Activated CD4-positive, alpha-beta T cell treated with anti-CD3 and anti-CD28 coated beads for 36 hours (primary cell): ENCODE measurements at regions of chr5 and their contacts with region 1.

Region 1: DNA sequence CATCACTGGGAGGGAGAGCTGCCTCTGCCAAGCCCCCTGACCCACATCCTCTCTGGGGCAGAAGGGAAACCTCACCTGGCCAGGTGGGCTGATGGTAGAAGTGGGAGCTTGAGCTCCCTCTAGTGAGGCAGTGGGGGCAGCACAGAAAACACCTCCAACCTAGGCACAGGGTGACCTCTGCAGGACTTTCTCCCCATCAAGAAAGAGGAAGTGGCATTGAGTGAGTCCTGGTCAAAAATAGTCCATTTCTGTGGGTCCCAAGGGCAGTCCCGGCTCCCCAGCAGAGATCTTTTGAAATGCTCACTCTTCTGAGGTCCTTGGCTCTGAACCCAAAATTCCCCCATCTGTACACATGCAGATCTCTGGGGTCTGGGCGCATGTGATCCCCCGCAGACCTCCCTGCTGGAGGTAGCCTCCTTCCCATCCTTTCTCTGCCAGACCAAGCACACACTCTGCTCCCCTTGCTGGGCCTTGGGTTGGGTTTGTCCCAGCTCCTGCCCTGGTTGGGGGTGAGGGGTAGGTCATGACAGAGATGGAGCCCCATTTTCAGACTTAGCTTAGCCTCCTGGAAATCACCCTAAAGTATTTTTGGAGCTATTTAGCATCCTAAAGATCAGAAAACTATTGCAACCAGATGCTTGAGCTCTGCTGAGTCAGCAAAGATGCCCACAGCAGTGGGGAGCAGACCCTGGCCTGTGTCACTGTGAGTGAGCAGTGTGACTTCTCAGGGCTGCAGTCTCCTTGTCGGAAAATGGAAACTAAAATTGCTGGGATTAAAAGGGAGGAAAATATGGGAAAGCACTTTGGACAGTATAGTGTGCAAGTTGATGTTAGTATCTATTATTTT is 41.6 kb upstream of the LCP2 start:
- DNase-seq: peak; percentile 80
- ATAC-seq: peak; percentile 82
- H3K4me3 Mint-ChIP-seq: no peak overlapping the region
- H3K27ac Mint-ChIP-seq: peak overlapping the region; percentile 8
- H3K4me1 Mint-ChIP-seq: peaks cover 45% of the 10 kb centered on the region
- H3K27me3 Mint-ChIP-seq: no peaks in the 10 kb centered on the region

Region 2: GRCh38 chr5:169650701-169651331 is 688.3 kb before region 1 on chr5:
- CTCF ChIA-PET with region 1: no interaction called
- POLR2A ChIA-PET with region 1: no interaction called
- intact Hi-C with region 1: loop called (anchors 10 kb)
- DNase-seq: peak; percentile 39
- ATAC-seq: peak; percentile 72
- H3K4me3 Mint-ChIP-seq: peak overlapping the region; percentile 56
- H3K27ac Mint-ChIP-seq: peak overlapping the region; percentile 97
- H3K4me1 Mint-ChIP-seq: peaks cover 98% of the 10 kb centered on the region
- H3K27me3 Mint-ChIP-seq: no peaks in the 10 kb centered on the region

Region 3: GRCh38 chr5:170225326-170226128 is 113.6 kb before region 1 on chr5:
- CTCF ChIA-PET with region 1: interaction called, 94 read pairs
- POLR2A ChIA-PET with region 1: no interaction called
- intact Hi-C with region 1: loop called (anchors 1 kb)
- DNase-seq: peak; percentile 87
- ATAC-seq: peak; percentile 64
- H3K4me3 Mint-ChIP-seq: no peak overlapping the region
- H3K27ac Mint-ChIP-seq: no peak overlapping the region
- H3K4me1 Mint-ChIP-seq: peaks cover 3% of the 10 kb centered on the region
- H3K27me3 Mint-ChIP-seq: no peaks in the 10 kb centered on the region

Region 4: GRCh38 chr5:170262061-170263045 is 76.8 kb before region 1 on chr5:
- CTCF ChIA-PET with region 1: interaction called, 89 read pairs
- POLR2A ChIA-PET with region 1: interaction called, 4 read pairs
- intact Hi-C with region 1: loop called in 1 of 2 experiments (anchors 1 kb)
- DNase-seq: no peak
- ATAC-seq: peak; percentile 39
- H3K4me3 Mint-ChIP-seq: peak overlapping the region; percentile 10
- H3K27ac Mint-ChIP-seq: peak overlapping the region; percentile 96
- H3K4me1 Mint-ChIP-seq: peaks cover 74% of the 10 kb centered on the region
- H3K27me3 Mint-ChIP-seq: no peaks in the 10 kb centered on the region

Region 5: GRCh38 chr5:170278611-170279452 is 60.3 kb before region 1 on chr5:
- CTCF ChIA-PET with region 1: interaction called, 71 read pairs
- POLR2A ChIA-PET with region 1: interaction called, 5 read pairs
- intact Hi-C with region 1: loop called in 1 of 2 experiments (anchors 1 kb)
- DNase-seq: peak; percentile 93
- ATAC-seq: peak; percentile 73
- H3K4me3 Mint-ChIP-seq: peak overlapping the region; percentile 48
- H3K27ac Mint-ChIP-seq: peak overlapping the region; percentile 90
- H3K4me1 Mint-ChIP-seq: peaks cover 97% of the 10 kb centered on the region
- H3K27me3 Mint-ChIP-seq: no peaks in the 10 kb centered on the region

Region 6: DNA sequence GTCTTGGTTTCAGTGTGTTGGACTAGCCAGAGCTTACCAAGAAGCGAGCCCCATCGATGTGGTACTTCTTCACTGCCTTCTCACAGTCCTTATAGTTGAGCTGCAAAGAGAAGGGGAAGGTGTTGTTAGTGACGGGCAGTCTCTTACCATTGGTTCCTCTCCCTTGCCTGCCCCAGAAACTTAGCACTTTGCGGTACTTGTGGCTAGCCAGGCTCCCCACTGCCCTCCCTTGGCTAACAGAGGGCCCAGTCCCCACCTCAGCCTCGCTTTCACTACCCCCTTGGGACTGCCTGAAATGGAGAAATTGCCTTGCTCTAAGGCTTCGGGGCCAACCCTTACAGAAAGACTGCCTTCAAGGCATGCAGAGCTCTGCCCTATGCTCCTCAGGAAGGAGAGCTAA is 45.9 kb before region 1 on chr5:
- CTCF ChIA-PET with region 1: interaction called, 85 read pairs
- POLR2A ChIA-PET with region 1: interaction called, 5 read pairs
- intact Hi-C with region 1: no loop called
- DNase-seq: peak; percentile 70
- ATAC-seq: peak; percentile 16
- H3K4me3 Mint-ChIP-seq: peak overlapping the region; percentile 88
- H3K27ac Mint-ChIP-seq: peak overlapping the region; percentile 97
- H3K4me1 Mint-ChIP-seq: peaks cover 72% of the 10 kb centered on the region
- H3K27me3 Mint-ChIP-seq: no peaks in the 10 kb centered on the region

Region 7: DNA sequence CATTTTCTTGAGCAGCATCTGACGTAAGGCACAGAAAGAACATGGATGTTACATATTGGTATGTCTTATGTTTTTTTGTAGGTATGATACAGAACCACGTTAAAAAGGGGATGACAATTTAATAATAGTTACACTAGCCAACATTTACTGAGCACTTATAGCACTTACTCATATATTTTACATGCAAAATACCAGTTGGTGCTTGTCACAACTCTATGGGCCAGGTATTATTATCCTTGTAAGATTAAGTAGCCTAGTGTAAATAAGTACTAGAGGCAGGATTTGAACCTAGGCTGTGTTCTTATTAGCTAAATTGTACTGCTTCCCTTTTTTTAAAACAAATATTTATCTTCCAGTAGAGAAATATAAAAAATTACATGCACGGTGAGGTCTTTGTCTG is 606.1 kb after region 1 on chr5:
- CTCF ChIA-PET with region 1: no interaction called
- POLR2A ChIA-PET with region 1: no interaction called
- intact Hi-C with region 1: no loop called
- DNase-seq: no peak
- ATAC-seq: no peak
- H3K4me3 Mint-ChIP-seq: no peak overlapping the region
- H3K27ac Mint-ChIP-seq: no peak overlapping the region
- H3K4me1 Mint-ChIP-seq: no peaks in the 10 kb centered on the region
- H3K27me3 Mint-ChIP-seq: no peaks in the 10 kb centered on the region